Vagina (tissue), 2 donors: ENCODE measurements at regions of chr5 and their contacts with region 1.

Region 1: DNA sequence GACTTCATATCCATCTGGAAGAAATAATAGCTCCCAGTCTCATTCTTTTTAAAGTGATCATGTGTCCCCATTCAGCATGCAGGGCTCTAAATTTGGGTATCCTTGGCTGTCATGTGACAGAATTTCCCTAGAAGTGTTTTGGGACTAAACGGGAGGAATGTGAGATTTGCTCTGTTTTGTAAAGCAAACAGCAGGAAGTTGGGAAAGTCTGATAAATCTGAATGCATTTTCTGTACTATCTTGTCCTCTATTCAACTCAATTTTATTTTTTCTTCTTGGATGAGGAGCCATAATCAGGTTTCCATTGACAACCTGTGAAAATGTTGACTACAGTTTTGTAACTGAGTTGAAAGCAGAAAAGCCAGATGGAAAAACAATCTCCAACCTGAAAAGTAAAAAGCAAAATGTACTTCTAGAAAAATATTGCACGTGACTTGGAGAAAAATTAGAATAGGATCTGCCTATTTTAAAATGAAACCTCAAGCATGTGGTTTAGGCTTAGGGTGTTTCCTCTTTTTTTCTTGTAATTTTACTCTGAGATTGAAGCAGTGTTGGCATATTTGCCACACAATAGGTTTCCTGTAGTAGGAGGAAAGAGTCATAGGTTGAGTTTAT is 76.2 kb upstream of the IL6ST start:
- DNase-seq: no peak
- H3K4me3 ChIP-seq: no peak overlapping the region
- H3K27ac ChIP-seq: peak overlapping the region; percentile 57
- H3K4me1 ChIP-seq: peaks cover 18% of the 10 kb centered on the region
- H3K27me3 ChIP-seq: no peaks in the 10 kb centered on the region
- CTCF ChIP-seq: no peak
- POLR2A ChIP-seq: no peak

Region 2: DNA sequence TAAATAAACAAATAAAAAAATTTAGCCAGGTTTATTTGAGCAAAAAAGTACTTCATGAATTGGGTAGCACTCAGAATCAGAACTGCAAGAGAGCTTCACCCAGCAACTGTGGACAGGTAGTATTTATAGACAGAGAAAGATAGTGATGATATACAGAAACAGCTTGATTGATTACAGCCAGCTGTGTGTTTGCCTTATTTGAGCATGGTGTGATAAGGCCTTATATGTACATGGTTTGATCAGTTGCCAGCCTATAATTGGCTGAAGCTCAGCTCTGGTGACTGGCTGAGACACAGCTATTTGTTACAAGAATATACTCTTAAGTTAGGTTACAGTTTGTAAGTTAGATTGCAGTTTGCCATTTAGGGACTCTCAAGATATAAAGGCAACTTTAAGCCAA is 1726.3 kb before region 1 on chr5:
- intact Hi-C with region 1: no loop called
- DNase-seq: no peak
- H3K4me3 ChIP-seq: no peak overlapping the region
- H3K27ac ChIP-seq: no peak overlapping the region
- H3K4me1 ChIP-seq: no peaks in the 10 kb centered on the region
- H3K27me3 ChIP-seq: no peaks in the 10 kb centered on the region
- CTCF ChIP-seq: no peak
- POLR2A ChIP-seq: no peak

Region 3: GRCh38 chr5:55994574-55995333 is 76.2 kb before region 1 on chr5 and contains the start of gene IL6ST:
- intact Hi-C with region 1: loop called (anchors 10 kb)
- DNase-seq: peak in 1 of 2 donors; percentile 98
- H3K4me3 ChIP-seq: peak within 1 kb of the TSS; percentile 85 to 97
- H3K27ac ChIP-seq: peak within 1 kb of the TSS; percentile 99
- H3K4me1 ChIP-seq: peaks cover 55% of the 10 kb centered on the region
- H3K27me3 ChIP-seq: no peaks in the 10 kb centered on the region
- CTCF ChIP-seq: peak in 1 of 3 experiments; percentile 3
- POLR2A ChIP-seq: peak in 1 of 2 donors; percentile 90
- total RNA-seq, gene IL6ST: 312 TPM

Region 4: DNA sequence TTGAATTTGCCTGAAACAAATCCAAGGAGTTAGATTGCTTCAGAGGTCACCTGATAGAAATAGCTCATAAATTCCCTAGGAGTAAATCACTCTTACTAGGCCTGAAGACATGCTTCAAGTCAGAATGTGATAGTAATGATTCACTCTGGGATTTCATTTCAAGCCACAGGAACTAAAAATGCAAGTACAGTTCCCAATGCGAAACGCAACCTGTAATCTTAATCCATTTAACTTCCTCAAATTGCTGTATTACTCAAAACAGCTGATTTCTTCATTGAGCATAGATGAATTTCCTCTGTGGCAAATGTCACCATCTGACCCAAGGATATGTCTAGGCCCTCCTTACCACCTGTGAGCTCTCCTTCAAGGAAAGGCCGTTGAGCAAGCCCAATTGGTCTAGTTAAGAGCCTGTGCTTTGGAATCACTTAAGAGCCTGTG is 44.1 kb before region 1 on chr5:
- intact Hi-C with region 1: loop called (anchors 10 kb)
- DNase-seq: no peak
- H3K4me3 ChIP-seq: no peak overlapping the region
- H3K27ac ChIP-seq: no peak overlapping the region
- H3K4me1 ChIP-seq: peaks cover 14% of the 10 kb centered on the region
- H3K27me3 ChIP-seq: no peaks in the 10 kb centered on the region
- CTCF ChIP-seq: no peak
- POLR2A ChIP-seq: no peak